ENCODE measurements at regions of chr22 and their contacts with region 1.

Region 1: DNA sequence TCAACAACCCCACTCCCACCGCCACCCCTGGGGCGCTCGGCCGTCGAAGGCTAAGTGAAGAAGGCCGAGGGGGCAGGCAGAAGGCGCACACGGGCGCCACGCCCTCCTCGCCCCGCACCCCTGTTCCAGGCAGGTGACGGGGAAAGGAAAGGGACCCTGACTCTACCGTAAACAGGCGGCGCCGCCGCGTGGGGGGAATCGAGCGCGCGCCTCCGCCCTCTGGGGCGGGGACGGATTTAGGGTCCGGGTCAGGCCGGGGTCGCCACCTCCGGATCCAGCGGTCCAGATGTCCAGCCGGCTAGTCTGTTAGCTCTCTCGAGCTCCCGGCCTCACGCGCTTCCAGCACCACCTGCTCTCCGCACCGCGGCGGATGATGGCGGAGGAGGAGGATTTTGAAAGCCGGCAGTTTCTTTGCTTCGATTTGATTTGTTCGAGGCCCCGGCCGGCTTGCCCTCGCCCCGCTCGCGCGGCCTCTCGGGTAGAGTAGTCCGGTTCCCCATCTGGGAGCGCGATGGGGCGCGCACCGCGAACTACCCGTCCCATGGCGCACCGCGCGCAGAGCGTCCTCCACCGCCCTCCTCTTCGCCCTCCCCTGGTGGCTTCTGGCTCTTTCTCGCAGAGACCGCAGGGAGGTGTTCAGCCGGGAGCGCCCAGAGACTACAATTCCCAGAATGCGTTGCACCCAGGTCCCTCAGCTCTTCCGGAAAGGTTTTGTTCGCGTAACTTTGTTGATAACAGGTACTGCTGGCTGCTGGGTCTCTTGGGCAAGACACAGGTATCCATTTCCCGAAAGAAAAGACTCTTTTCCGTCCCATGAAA is at the start of gene RANGAP1:
- DNase-seq: peak; percentile 93 to 99
- H3K4me3 ChIP-seq: peak within 1 kb of the TSS; percentile 69 to 99
- H3K27ac ChIP-seq: peak within 1 kb of the TSS; percentile 77 to 78
- H3K4me1 ChIP-seq: peaks cover 3 to 27% of the 10 kb centered on the region in 2 donors
- H3K27me3 ChIP-seq: no peaks in the 10 kb centered on the region
- CTCF ChIP-seq: peak in 2 of 3 experiments; percentile 10
- total RNA-seq, gene RANGAP1: 49.8 TPM

Region 2: DNA sequence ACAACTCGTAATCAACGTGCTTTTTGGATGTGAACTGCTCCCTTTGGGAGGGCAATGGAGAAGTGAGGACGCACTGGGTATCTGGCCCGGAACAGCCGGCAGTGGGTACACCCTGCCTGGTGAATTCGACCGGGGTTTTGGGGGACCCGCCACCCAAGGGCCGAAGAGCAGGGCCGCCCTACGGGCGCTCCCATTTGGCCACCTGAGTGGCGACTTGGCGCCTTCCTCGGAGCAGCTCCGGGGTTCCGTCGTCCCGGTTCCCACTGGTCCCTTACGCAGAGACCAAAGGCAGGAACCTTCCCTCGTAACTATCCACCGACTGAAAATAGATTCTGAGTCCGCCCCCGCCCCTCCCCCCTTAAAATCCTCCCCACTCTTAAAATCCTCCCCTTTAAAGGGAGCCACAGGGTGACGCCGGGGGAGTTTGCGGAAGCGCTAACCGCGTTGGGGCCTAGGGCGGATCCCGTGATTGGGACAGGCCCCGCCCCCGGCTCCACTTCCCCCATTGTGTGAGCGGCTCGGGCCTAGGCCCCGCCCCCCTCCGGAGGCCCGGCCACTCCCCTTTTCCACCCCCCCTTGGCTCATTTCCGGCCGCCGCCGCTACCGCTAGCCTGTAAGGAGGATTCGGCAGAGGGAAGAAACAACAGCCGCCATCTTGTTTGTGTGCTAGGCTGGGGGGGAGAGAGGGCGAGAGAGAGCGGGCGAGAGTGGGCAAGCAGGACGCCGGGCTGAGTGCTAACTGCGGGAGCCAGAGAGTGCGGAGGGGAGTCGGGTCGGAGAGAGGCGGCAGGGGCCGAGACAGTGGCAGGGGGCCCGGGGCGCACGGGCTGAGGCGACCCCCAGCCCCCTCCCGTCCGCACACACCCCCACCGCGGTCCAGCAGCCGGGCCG is 194.7 kb before region 1 on chr22:
- intact Hi-C with region 1: loop called (anchors 5 kb)
- DNase-seq: peak; percentile 96 to 100
- H3K4me3 ChIP-seq: peak overlapping the region; percentile 84 to 94
- H3K27ac ChIP-seq: peak overlapping the region; percentile 99 to 100
- H3K4me1 ChIP-seq: peaks cover 0 to 4% of the 10 kb centered on the region in 2 donors
- H3K27me3 ChIP-seq: no peaks in the 10 kb centered on the region
- CTCF ChIP-seq: no peak

Region 3: DNA sequence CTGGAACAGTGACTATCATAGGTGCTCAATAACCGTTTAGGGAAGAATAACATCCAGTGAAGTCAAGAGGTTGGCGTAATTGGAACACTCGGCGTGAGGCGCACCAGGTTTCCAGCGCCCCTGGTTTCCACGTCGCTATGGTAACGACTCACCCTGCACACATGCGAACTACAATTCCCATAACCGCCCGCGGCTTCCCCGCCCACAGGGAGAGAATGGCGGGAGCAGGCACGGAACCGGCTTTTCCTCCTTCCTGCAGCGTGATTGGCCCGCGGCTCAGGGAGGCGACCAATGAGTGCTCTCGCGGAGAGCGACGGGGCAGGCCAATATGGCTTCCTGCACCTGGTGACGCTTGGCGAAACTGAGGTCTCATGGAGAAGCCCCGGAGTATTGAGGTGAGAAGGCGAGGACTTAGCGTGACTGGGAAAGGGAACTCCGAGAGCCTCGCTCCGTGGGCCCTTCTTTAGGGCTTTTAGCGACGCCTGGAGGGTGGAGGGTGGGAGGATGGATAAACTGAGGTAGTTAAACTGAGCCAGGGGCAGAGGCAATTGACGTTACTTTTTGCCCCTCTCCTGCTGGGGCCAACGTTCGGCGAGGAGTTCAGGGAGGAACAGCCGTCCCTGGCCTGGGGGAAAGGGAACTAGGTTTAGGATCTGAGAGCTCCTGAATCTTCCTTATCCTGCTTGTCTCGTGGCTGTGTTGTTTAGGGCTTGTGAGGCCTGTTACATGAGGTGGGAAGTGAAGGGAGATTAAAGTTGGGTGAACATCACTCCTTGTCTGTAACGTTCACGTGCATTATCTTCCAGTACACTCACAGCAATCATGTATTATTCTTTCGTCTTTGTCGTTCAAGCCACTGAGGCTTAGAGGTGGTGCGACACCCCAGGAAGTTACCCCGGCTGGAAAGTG is 80.8 kb before region 1 on chr22 and contains the start of gene L3MBTL2:
- intact Hi-C with region 1: loop called (anchors 2 kb)
- DNase-seq: peak; percentile 95 to 99
- H3K4me3 ChIP-seq: peak within 1 kb of the TSS; percentile 63 to 89
- H3K27ac ChIP-seq: peak within 1 kb of the TSS; percentile 72 to 73
- H3K4me1 ChIP-seq: peaks cover 4 to 5% of the 10 kb centered on the region in 2 donors
- H3K27me3 ChIP-seq: no peaks in the 10 kb centered on the region
- CTCF ChIP-seq: no peak
- total RNA-seq, gene L3MBTL2: 33.3 TPM

Region 4: DNA sequence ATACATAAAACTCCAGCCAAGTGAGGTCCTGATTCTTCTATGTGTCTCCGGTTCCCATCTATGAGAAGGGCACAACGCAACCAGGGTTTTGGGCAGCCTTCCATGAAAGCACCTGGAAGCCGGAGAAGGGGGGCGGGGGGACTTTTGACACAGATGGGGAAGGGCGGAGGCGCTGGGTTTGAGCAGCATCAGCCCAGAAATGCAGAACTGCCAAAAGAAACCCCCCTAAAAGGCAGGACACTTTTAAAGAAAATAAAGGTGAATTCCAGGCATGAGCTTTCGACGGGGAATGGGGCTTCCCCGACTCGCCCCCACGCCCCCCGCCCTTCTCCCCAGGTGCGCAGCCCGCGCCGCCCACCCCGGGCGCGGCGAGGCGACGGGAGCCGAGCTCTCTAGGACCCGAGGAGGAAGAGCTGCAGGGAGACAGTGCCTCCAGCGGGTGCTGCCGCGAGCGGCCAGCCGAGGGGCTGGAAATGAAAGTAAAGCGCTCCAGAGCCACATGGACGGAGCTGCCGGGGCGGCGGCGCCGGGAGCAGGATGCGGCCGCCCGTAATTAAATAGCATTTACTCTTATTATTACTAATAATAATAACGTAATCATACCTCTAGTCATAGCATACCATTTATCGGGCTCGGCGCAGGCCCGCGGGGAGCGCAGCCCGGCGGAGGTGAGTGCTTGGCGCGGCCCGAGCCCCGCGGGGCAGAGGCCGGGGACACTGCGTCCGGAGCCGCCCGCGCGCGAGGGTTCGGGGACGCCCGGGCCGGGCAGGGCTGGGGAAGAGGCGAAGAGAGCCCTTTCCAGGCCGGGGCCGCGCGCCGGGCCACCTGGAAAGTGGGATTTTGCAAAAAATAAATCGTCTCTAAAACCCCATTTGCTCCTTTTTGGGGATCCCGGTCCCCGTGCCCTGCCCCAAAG is 15.3 kb after region 1 on chr22 and contains the start of gene ZC3H7B:
- intact Hi-C with region 1: loop called (anchors 1 kb)
- DNase-seq: peak; percentile 24 to 90
- H3K4me3 ChIP-seq: peak within 1 kb of the TSS; percentile 78 to 86
- H3K27ac ChIP-seq: peak within 1 kb of the TSS; percentile 81 to 86
- H3K4me1 ChIP-seq: peaks cover 0 to 7% of the 10 kb centered on the region in 2 donors
- H3K27me3 ChIP-seq: no peaks in the 10 kb centered on the region
- CTCF ChIP-seq: peak; percentile 22 to 73 (median 61)
- total RNA-seq, gene ZC3H7B: 54.9 TPM

Region 5: GRCh38 chr22:41367039-41367679 is 81.1 kb after region 1 on chr22:
- intact Hi-C with region 1: loop called (anchors 5 kb)
- DNase-seq: peak; percentile 80 to 96
- H3K4me3 ChIP-seq: peak overlapping the region; percentile 57 to 63
- H3K27ac ChIP-seq: peak overlapping the region; percentile 53 to 56
- H3K4me1 ChIP-seq: peaks cover 10 to 26% of the 10 kb centered on the region in 2 donors
- H3K27me3 ChIP-seq: no peaks in the 10 kb centered on the region
- CTCF ChIP-seq: peak; percentile 14 to 36 (median 35)

Region 6: DNA sequence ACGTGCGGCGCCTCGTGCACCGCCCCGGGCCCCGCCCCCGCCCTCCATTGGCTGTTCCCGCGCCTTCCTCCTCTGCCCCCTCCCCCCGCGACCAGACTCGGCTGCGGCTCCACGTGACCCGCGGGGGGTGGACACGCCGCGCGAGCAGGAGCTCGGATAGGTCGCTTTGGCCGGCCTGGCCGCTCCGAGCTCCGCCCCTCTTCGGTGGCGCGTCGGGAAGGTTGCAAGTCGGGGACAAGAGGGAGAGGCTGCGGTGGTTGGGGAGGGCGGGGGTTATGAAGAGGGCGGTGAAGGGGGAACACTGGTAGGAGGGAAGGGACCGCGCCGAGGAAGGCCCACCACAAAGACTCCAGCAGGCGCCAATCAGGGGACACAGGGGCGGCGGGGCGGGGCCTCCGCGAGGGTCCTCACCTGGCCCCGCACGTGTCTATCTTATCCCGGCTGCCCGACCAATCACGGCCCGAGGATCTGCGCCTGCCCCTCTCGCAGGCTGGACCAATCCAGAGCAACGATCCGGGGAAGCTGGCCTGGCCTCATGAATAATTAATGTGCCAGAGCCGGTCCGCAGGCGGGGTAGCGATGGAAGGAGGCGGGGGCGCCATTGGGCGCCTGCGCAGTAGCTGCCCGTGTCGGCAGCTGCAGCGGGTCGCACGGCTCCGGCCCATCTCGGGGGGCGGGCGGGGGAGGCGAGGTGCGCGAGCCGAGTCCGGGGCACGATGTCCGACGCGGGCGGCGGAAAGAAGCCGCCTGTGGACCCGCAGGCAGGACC is 95.5 kb after region 1 on chr22 and contains the start of gene TEF:
- intact Hi-C with region 1: loop called (anchors 1 kb)
- DNase-seq: peak; percentile 97 to 99
- H3K4me3 ChIP-seq: peak within 1 kb of the TSS; percentile 79 to 87
- H3K27ac ChIP-seq: peak within 1 kb of the TSS; percentile 93 to 96
- H3K4me1 ChIP-seq: peaks cover 3 to 19% of the 10 kb centered on the region in 2 donors
- H3K27me3 ChIP-seq: no peaks in the 10 kb centered on the region
- CTCF ChIP-seq: no peak
- total RNA-seq, gene TEF: 20.2 TPM

Region 7: DNA sequence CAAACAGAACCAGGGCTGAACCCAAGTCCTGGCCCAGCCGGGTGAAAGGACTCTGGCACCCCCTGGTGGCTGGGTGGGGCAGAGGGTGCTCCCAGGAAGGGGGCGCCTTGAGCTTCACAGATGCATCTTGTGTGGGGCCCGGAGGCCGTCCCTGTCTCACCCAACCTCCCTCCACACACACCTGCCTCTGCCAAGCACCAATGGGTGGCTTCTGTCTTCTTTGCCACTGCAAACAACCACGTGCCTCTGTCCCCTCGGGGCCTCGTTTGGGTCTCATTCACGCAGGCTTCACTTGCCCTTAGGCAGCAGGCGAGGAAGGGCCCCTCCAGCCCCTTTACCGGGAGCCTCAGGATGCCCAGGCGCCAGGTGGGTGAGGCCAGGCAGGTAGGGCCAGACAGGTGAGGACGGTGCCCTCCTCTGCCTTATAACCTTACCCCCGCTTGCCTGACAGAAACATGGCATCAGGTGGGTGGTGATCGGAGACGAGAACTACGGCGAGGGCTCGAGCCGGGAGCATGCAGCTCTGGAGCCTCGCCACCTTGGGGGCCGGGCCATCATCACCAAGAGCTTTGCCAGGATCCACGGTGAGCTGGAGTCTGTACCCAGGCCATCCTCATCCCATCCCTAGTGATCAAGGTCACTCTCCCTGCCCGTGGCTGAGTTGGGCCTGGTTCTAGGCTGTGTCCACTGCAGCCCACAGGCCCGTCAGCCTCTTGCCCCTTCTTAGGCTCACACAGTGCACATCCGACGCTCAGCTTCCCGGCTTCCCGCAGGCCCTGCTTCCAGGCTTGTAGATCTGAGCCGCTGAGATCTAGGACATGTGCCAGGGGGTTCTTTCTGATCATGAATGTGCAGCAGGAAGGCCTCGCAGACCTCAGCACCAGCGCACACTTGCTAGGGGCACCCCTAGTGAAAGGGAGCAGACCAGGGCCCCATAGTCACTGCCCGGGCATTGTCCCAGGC is 241.1 kb after region 1 on chr22:
- intact Hi-C with region 1: loop called (anchors 5 kb)
- DNase-seq: peak in 1 of 2 donors; percentile 75
- H3K4me3 ChIP-seq: no peak overlapping the region
- H3K27ac ChIP-seq: peak overlapping the region; percentile 94 to 96
- H3K4me1 ChIP-seq: peaks cover 24 to 31% of the 10 kb centered on the region in 2 donors
- H3K27me3 ChIP-seq: no peaks in the 10 kb centered on the region
- CTCF ChIP-seq: peak; percentile 77 to 88 (median 81)